HCT116 (cell line): ENCODE measurements at regions of chr21 and their contacts with region 1.

Region 1: GRCh38 chr21:19343711-19344110 is 940.1 kb upstream of the TMPRSS15 start:
- DNase-seq: no peak
- ATAC-seq: no peak
- H3K4me3 ChIP-seq: no peak overlapping the region
- H3K27ac ChIP-seq: no peak overlapping the region
- H3K4me1 ChIP-seq: no peaks in the 10 kb centered on the region
- H3K27me3 ChIP-seq: no peaks in the 10 kb centered on the region
- CTCF ChIP-seq: no peak
- POLR2A ChIP-seq: no peak
- RAD21 ChIP-seq: no peak

Region 2: GRCh38 chr21:19405326-19405725 is 61.6 kb after region 1 on chr21:
- CTCF ChIA-PET with region 1: no interaction called
- POLR2A ChIA-PET with region 1: no interaction called
- RAD21 ChIA-PET with region 1: no interaction called
- intact Hi-C with region 1: loop called (anchors 2 kb)
- DNase-seq: no peak
- ATAC-seq: no peak
- H3K4me3 ChIP-seq: no peak overlapping the region
- H3K27ac ChIP-seq: no peak overlapping the region
- H3K4me1 ChIP-seq: no peaks in the 10 kb centered on the region
- H3K27me3 ChIP-seq: no peaks in the 10 kb centered on the region
- CTCF ChIP-seq: no peak
- POLR2A ChIP-seq: no peak
- RAD21 ChIP-seq: no peak